ENCODE measurements at regions of chr6 and their contacts with region 1.

Region 1: DNA sequence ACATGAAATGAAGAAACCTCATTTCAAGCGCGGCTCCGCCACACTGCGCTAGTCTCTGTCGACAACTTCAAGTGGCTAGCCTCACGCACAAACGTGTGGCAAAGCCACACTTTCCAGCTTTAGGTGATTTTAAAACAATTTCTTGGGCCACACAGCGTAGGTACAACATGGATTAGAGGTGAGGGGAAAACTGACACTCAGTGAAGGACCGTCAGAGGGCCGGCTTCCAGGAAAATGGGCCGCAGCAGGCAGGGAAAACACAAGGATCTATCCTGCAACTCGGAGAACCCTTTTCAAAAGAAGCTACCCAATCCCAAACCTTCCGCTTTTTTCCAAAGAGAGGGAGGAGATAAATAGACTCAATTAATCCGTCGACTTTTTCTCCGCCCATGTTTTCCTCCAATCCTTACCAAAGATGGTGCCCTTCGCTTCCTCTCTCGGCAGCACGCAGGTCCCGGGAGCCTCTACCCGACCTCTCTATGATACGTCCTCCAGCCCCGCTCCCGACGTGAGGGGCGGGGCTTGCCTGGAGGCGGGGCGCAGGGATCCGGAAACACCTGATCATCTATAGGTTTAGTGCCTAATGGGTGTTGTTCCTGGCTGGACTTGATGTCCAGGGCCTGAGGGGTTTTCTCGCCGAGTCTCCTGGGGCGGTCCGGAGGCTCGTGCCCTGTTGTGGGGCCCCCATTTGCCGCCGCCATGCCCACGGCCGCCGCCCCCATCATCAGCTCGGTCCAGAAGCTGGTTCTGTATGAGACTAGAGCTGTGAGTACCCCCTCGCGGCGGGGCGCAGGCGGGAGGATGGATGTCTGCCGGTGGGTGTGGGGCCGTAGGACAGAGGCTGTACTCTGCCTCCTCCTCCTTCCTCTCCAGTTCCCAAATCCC is at the starts of genes AK9 and FIG4:
- DNase-seq: peak; percentile 84
- H3K4me3 Mint-ChIP-seq: peak within 1 kb of the TSS; percentile 96
- H3K27ac Mint-ChIP-seq: peak within 1 kb of the TSS; percentile 86
- H3K4me1 Mint-ChIP-seq: peaks cover 26% of the 10 kb centered on the region
- H3K27me3 Mint-ChIP-seq: peaks cover 10% of the 10 kb centered on the region
- total RNA-seq, gene AK9: 3.1 and 3.8 TPM in 2 replicates
- total RNA-seq, gene FIG4: 8.8 and 9.5 TPM in 2 replicates

Region 2: GRCh38 chr6:108988296-108988695 is 702.7 kb before region 1 on chr6:
- intact Hi-C with region 1: no loop called
- DNase-seq: no peak
- H3K4me3 Mint-ChIP-seq: no peak overlapping the region
- H3K27ac Mint-ChIP-seq: no peak overlapping the region
- H3K4me1 Mint-ChIP-seq: no peaks in the 10 kb centered on the region
- H3K27me3 Mint-ChIP-seq: no peaks in the 10 kb centered on the region

Region 3: DNA sequence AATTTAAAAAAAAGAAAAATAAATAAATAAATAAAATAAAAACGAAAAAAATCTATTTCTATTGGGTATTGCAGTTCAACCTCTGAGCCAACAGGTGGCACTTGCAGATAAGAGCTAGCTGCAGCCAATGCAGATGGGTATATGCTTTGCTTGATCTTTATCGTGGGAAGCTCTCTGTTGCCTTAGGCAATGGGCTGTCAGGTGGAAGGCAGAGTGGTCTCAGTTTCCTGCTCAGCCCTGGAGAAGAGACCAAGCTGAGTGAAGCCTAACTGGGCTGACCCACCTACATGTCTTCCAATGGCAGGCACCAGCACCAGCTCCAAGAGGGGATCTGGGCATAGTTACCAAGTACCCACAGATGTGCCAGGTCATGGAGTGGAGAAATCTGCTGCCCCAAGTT is 95.0 kb before region 1 on chr6:
- intact Hi-C with region 1: loop called (anchors 5 kb)
- DNase-seq: no peak
- H3K4me3 Mint-ChIP-seq: no peak overlapping the region
- H3K27ac Mint-ChIP-seq: no peak overlapping the region
- H3K4me1 Mint-ChIP-seq: peaks cover 2% of the 10 kb centered on the region
- H3K27me3 Mint-ChIP-seq: no peaks in the 10 kb centered on the region

Region 4: GRCh38 chr6:109655761-109656262 is 35.2 kb before region 1 on chr6:
- intact Hi-C with region 1: no loop called
- DNase-seq: no peak
- H3K4me3 Mint-ChIP-seq: no peak overlapping the region
- H3K27ac Mint-ChIP-seq: no peak overlapping the region
- H3K4me1 Mint-ChIP-seq: no peaks in the 10 kb centered on the region
- H3K27me3 Mint-ChIP-seq: peaks cover 2% of the 10 kb centered on the region

Region 5: DNA sequence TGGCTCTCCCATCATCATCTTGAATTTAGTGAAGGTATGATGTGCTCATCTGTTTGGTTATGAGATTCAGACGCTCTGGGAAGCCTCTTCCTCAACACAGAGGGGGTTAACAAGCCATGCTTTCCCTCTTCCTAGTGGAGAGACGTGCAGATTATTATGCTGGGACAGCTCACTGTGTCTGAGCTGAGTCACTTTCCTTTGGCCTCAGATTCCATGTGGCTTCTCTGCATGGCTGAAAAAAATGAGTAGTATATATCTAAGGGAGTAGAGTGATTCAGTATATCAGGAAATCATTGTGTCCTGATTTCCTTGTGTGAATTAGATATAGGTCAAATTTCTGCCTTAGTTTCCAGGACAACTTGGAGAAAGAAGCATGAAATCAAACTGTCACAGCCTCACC is 52.8 kb after region 1 on chr6:
- intact Hi-C with region 1: no loop called
- DNase-seq: no peak
- H3K4me3 Mint-ChIP-seq: no peak overlapping the region
- H3K27ac Mint-ChIP-seq: no peak overlapping the region
- H3K4me1 Mint-ChIP-seq: no peaks in the 10 kb centered on the region
- H3K27me3 Mint-ChIP-seq: no peaks in the 10 kb centered on the region

Measured in activated T-helper 2 cell treated with anti-CD3 and anti-CD28 coated beads, Interferon-gamma antibody, Interleukin-2, Interleukin-4, amounts not matched to agents 10 μg/mL and 5 μg/mL and 100 μg/mL, durations not matched to agents 14 hours and 24 hours and 36 hours (primary cell).